Colonic mucosa (tissue), 4 donors: ENCODE measurements at regions of chr9 and their contacts with region 1.

Region 1: DNA sequence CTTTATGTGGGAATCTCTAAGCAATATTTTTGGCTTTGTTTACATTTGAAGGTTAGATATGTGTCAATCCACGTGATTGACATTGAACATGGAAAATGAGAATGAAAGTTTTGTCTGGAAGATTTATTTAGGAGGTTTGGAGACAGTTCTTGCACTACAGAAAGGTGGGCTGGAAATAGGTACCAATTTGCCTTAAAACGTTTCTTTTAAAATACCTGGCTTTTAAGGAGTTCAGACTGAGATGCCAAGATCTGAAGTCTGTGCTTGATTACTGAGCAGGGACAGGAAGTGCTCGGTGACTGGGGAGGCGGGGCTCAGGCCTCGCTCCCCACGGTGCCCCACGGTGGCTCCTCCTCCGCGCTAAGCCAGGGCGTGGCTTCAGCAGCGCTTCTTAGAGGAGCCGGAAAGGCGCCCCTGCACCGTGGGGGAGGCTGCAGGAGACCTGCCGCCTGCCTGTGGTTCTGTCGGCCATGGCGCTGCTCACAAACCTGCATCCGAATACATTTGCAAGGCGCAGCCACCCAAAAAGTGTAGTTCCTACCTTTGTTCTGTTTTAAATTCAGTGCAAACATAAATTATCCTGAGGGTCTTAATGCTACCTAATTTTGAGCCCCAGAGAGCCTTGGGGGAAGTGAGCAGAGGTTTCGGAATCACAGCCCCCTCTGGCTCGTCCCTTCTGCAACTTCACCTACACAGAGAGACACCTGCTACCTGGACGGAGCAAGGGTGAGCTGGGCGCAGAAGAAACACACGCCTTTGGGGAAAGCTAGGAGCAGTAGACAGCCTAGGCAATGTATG is 49.2 kb downstream of the USP20 start:
- DNase-seq: peak; percentile 96
- H3K4me3 ChIP-seq: peak overlapping the region; percentile 34
- H3K27ac ChIP-seq: peak overlapping the region; percentile 81
- H3K4me1 ChIP-seq: peaks cover 7% of the 10 kb centered on the region
- H3K27me3 ChIP-seq: no peaks in the 10 kb centered on the region
- CTCF ChIP-seq: no peak

Region 2: GRCh38 chr9:129803676-129804060 is 80.8 kb before region 1 on chr9:
- intact Hi-C with region 1: no loop called
- DNase-seq: peak; percentile 53
- H3K4me3 ChIP-seq: peak overlapping the region; percentile 82
- H3K27ac ChIP-seq: peak overlapping the region; percentile 86
- H3K4me1 ChIP-seq: peaks cover 10% of the 10 kb centered on the region
- H3K27me3 ChIP-seq: no peaks in the 10 kb centered on the region
- CTCF ChIP-seq: no peak

Region 3: DNA sequence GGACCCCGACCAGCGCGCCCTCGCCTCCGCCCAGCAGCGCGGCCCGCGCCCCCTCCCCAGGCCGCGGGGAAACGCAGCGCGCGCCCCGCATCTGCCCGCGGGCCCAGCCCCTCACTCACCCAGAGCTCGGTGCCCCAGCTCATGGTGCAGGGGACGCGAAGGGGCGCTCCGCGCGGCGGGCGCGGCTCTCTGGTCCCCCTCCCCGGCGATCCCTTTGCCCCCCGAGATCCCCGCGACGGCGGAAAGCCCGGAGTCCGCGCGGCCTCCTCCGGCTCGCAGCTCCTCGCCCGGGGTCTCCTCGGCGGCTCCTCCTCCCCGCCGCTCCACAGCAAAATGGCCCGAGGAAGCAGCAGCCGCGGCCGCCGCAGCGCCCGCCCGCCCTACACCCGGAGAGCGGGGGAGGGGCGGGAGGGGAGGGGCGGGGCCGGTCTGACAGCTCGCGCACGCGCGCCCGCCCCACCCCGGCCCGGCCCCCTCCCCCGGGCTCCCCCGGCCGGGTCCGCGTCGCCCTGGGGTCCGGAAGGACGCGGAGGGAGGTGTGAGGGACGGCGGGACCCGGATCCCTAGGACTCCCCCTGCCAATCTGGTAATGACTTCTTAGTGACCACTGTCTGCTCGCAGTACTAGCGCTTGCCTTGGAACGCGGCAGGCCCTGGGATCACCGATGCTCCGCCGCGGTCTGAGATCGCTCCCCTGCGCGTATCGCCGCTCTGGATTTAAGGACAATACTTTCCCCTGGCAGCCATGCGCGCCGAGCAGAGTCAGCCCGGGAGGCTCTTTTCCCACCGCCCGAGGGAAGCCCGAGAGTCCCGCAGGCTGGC is 158.6 kb after region 1 on chr9 and contains the start of gene FNBP1:
- intact Hi-C with region 1: loop called (anchors 5 kb)
- DNase-seq: peak; percentile 80
- H3K4me3 ChIP-seq: peak within 1 kb of the TSS; percentile 89
- H3K27ac ChIP-seq: peak within 1 kb of the TSS; percentile 84
- H3K4me1 ChIP-seq: peaks cover 6% of the 10 kb centered on the region
- H3K27me3 ChIP-seq: no peaks in the 10 kb centered on the region
- CTCF ChIP-seq: no peak
- total RNA-seq, gene FNBP1: 24.7 to 55.5 TPM

Region 4: DNA sequence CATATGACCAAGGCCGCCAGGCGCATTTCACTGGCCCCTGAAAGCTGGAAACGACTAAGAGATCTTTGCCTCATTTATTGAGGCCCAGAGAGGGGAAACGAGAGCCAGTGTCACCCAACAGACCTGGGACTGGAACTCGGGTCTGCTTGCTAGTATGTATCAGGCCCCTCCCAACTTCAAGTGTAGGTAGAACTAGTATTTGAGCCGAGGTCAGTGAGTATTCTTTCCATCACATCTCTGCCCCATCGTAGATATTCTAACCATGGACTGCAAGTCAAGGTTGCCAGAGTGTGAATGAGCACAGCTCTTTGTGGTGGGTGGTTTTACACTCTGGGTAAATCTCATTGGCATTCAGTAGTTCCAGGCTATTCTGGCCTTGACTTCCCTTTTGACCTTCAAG is 211.5 kb after region 1 on chr9:
- intact Hi-C with region 1: loop called (anchors 5 kb)
- DNase-seq: no peak
- H3K4me3 ChIP-seq: no peak overlapping the region
- H3K27ac ChIP-seq: no peak overlapping the region
- H3K4me1 ChIP-seq: no peaks in the 10 kb centered on the region
- H3K27me3 ChIP-seq: no peaks in the 10 kb centered on the region
- CTCF ChIP-seq: no peak